ENCODE measurements at regions of chr10 and their contacts with region 1.

Region 1: GRCh38 chr10:104254493-104255310 is at the start of gene GSTO1:
- DNase-seq: peak; percentile 44
- ATAC-seq: peak; percentile 84
- H3K4me3 Mint-ChIP-seq: peak within 1 kb of the TSS; percentile 93
- H3K27ac Mint-ChIP-seq: peak within 1 kb of the TSS; percentile 88
- H3K4me1 Mint-ChIP-seq: peaks cover 37% of the 10 kb centered on the region
- H3K27me3 Mint-ChIP-seq: peaks cover 8% of the 10 kb centered on the region
- CTCF ChIP-seq: no peak
- total RNA-seq, gene GSTO1: 43.0 and 55.9 TPM in 2 replicates

Region 2: GRCh38 chr10:104231784-104232612 is 22.7 kb before region 1 on chr10 and contains the start of gene CFAP43:
- CTCF ChIA-PET with region 1: no interaction called
- POLR2A ChIA-PET with region 1: no interaction called
- intact Hi-C with region 1: loop called (anchors 1 kb)
- DNase-seq: peak; percentile 96
- ATAC-seq: peak; percentile 100
- H3K4me3 Mint-ChIP-seq: peak within 1 kb of the TSS; percentile 83
- H3K27ac Mint-ChIP-seq: peak within 1 kb of the TSS; percentile 41
- H3K4me1 Mint-ChIP-seq: peaks cover 12% of the 10 kb centered on the region
- H3K27me3 Mint-ChIP-seq: peaks cover 16% of the 10 kb centered on the region
- CTCF ChIP-seq: no peak
- total RNA-seq, gene CFAP43: 0.22 TPM in 1 of 2 replicates, not detected in the other

Region 3: GRCh38 chr10:104274762-104275721 is 20.3 kb after region 1 on chr10:
- CTCF ChIA-PET with region 1: interaction called, 23 read pairs
- POLR2A ChIA-PET with region 1: interaction called, 45 read pairs
- intact Hi-C with region 1: no loop called
- DNase-seq: peak; percentile 36
- ATAC-seq: peak; percentile 83
- H3K4me3 Mint-ChIP-seq: no peak overlapping the region
- H3K27ac Mint-ChIP-seq: no peak overlapping the region
- H3K4me1 Mint-ChIP-seq: peaks cover 6% of the 10 kb centered on the region
- H3K27me3 Mint-ChIP-seq: peaks cover 5% of the 10 kb centered on the region
- CTCF ChIP-seq: no peak

Region 4: GRCh38 chr10:104548090-104548489 is 293.4 kb after region 1 on chr10:
- CTCF ChIA-PET with region 1: no interaction called
- POLR2A ChIA-PET with region 1: no interaction called
- intact Hi-C with region 1: no loop called
- DNase-seq: no peak
- ATAC-seq: no peak
- H3K4me3 Mint-ChIP-seq: no peak overlapping the region
- H3K27ac Mint-ChIP-seq: no peak overlapping the region
- H3K4me1 Mint-ChIP-seq: no peaks in the 10 kb centered on the region
- H3K27me3 Mint-ChIP-seq: no peaks in the 10 kb centered on the region
- CTCF ChIP-seq: no peak

Region 5: DNA sequence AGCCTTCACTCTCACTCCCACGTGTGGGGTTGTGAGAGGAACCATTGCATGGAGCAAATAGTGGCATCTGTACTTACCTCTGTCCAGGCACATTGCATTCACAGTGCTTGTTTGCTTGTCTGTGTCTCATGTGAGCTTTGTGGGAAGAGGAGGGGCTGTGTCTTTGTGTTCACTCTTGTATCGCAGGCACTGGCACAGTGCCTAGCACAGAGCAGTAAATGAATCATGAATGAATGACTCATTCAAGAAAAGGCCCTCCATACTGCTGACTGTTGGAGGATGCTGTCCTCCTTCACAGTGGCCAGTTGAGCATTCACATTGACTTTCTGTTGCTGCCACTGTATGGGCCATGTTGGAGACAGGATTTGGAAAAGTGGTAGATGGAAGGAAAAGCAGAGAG is 511.6 kb after region 1 on chr10:
- CTCF ChIA-PET with region 1: no interaction called
- POLR2A ChIA-PET with region 1: no interaction called
- intact Hi-C with region 1: no loop called
- DNase-seq: no peak
- ATAC-seq: no peak
- H3K4me3 Mint-ChIP-seq: no peak overlapping the region
- H3K27ac Mint-ChIP-seq: no peak overlapping the region
- H3K4me1 Mint-ChIP-seq: no peaks in the 10 kb centered on the region
- H3K27me3 Mint-ChIP-seq: peaks cover 2% of the 10 kb centered on the region
- CTCF ChIP-seq: no peak

Measured in activated B cell treated with CpG ODN at 0.5 μM for 24 hours (primary cell).